Activated B cell treated with CpG ODN at 0.5 μM for 24 hours (primary cell): ENCODE measurements at regions of chr13 and their contacts with region 1.

Region 1: DNA sequence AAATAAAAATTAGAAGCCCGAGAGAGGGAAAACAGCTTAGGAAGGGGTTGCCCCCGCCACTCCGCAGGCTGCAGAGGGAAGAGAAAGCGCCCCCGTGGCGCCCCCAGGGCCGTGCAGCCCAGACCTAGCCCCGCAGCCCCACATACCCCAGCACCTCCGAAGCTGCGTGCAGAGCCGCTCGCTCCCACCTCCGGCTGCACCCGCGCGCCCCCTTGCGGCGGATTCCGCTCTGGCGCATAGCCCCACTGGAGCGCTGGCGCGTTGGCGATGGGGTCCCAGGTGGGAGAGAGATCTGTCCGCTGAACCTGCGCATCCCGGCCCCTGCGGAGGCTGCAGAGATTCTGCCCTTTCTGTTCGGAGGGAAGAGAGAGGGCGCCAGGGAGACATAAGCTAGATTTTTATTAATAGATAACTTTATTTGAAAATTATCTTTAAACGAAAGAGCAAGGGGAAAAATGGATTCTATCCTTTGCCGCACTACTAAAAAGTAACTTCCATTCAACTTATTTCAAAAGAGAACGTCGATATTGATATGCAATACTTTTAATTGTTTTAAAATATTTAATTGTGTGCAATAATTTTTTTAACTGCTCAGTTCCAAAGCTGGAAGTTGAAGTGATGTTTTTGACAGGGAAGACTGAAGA is 11.7 kb upstream of the CLN5 start:
- DNase-seq: peak; percentile 84
- ATAC-seq: peak; percentile 100
- H3K4me3 Mint-ChIP-seq: peak overlapping the region; percentile 64
- H3K27ac Mint-ChIP-seq: no peak overlapping the region
- H3K4me1 Mint-ChIP-seq: peaks cover 2% of the 10 kb centered on the region
- H3K27me3 Mint-ChIP-seq: peaks cover 22% of the 10 kb centered on the region
- CTCF ChIP-seq: peak; percentile 96

Region 2: GRCh38 chr13:75870397-75870903 is 1109.7 kb before region 1 on chr13:
- CTCF ChIA-PET with region 1: interaction called, 21 read pairs
- POLR2A ChIA-PET with region 1: no interaction called
- intact Hi-C with region 1: loop called (anchors 1 kb)
- DNase-seq: no peak
- ATAC-seq: no peak
- H3K4me3 Mint-ChIP-seq: peak overlapping the region; percentile 25
- H3K27ac Mint-ChIP-seq: no peak overlapping the region
- H3K4me1 Mint-ChIP-seq: peaks cover 2% of the 10 kb centered on the region
- H3K27me3 Mint-ChIP-seq: peaks cover 13% of the 10 kb centered on the region
- CTCF ChIP-seq: no peak

Region 3: GRCh38 chr13:75876360-75877050 is 1103.7 kb before region 1 on chr13:
- CTCF ChIA-PET with region 1: interaction called, 21 read pairs
- POLR2A ChIA-PET with region 1: no interaction called
- intact Hi-C with region 1: loop called (anchors 1 kb)
- DNase-seq: no peak
- ATAC-seq: peak; percentile 81
- H3K4me3 Mint-ChIP-seq: no peak overlapping the region
- H3K27ac Mint-ChIP-seq: no peak overlapping the region
- H3K4me1 Mint-ChIP-seq: peaks cover 2% of the 10 kb centered on the region
- H3K27me3 Mint-ChIP-seq: peaks cover 13% of the 10 kb centered on the region
- CTCF ChIP-seq: no peak